ENCODE measurements at regions of chr19 and their contacts with region 1.

Region 1: GRCh38 chr19:4342615-4343369 is 570 bp upstream of the MPND start:
- DNase-seq: peak; percentile 98
- ATAC-seq: peak; percentile 97

Region 2: DNA sequence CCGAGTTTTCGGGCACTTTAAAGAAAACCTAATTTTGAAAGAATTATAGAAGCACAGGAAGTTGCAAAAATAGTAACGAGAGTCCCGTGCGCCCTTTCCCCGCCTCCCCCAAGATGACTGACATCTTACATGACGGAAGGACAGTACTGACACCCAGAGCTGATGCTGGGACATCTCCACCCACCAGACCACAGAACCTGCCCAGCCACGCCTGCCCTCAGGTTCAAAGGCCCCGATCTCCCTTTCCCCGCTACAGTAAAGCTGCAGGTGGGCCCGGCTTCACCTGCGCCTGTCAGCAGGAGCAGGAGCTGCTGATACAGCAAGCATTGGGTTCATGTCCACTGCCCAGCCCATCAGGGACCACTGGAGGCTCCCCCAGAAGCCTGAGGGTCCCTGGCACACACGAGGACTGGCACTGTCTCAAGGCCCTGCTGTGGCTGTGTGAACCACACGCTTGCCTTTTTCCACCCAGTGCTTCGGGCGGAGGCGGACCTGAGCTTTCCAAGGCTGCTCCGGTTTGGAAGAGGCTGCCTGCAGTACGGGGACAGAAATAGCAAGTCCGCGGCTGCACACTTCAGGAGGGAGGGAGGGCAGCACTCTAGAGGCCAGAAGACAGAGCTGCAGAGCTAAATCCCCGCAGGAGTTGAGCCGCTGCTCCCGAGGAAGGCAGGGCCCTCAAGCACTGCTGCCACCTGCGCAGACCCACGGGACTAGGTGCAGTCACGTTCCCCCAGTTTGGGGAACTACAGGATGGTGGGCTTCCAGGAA is 227.6 kb before region 1 on chr19:
- intact Hi-C with region 1: no loop called
- DNase-seq: no peak
- ATAC-seq: peak; percentile 78

Region 3: DNA sequence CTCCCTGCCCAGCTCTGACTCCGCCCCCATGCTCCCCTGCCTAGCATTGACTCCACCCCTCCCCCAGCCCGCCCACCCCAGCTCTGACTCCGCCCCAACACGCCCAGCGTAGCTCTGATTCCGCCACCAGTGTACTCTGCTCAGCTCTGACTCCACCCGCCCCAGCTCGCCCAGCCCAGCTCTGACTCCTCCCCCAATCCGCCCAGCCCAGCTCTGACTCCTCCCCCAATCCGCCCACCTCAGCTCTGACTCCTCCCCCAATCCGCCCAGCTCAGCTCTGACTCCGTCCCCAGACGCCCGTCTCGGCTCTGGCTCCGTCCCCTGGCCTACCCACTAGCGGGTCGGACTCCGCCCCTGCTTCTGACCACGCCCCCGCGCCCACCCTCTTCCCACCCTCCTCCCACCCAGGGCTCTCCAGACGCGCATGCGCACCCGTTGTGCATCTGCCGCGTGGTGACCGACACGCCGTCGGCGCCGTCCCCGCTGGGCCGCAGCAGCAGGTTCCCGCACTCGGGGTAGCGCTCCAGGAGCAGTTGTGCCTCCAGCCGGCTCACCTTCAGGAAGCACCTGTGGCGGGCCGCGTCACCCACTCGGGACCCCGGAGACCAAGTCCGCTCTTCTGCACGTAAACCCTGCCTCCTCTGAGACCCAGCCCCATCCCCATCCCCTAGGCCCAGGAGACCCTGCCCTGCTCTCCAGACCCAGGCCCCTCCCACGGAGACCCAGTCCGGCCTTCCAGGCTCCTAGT is 14.4 kb before region 1 on chr19:
- intact Hi-C with region 1: loop called (anchors 1 kb)
- DNase-seq: peak; percentile 96
- ATAC-seq: peak; percentile 94